H1 (cell line): ENCODE measurements at regions of chr3 and their contacts with region 1.

Region 1: GRCh38 chr3:10344147-10344943 is 23.4 kb upstream of the SEC13 start:
- DNase-seq: peak; percentile 33 to 85
- H3K4me3 ChIP-seq: no peak overlapping the region
- H3K27ac ChIP-seq: no peak overlapping the region
- H3K4me1 ChIP-seq: peaks cover 0 to 2% (median 0%) of the 10 kb centered on the region in 4 experiments; a peak in 1 of 7 replicates
- H3K27me3 ChIP-seq: no peaks in the 10 kb centered on the region
- CTCF ChIP-seq: peak in 2 of 3 experiments; percentile 87 to 90; a peak in 3 of 4 replicates
- EP300 ChIP-seq: no peak
- POLR2A ChIP-seq: no peak
- RAD21 ChIP-seq: peak; percentile 90 to 91

Region 2: GRCh38 chr3:10299679-10300078 is 44.7 kb before region 1 on chr3:
- CTCF ChIA-PET with region 1: no interaction called
- POLR2A ChIA-PET with region 1: no interaction called
- DNase-seq: no peak
- H3K4me3 ChIP-seq: no peak overlapping the region
- H3K27ac ChIP-seq: no peak overlapping the region
- H3K4me1 ChIP-seq: no peaks in the 10 kb centered on the region
- H3K27me3 ChIP-seq: no peaks in the 10 kb centered on the region
- CTCF ChIP-seq: no peak
- EP300 ChIP-seq: no peak
- POLR2A ChIP-seq: no peak
- RAD21 ChIP-seq: no peak

Region 3: DNA sequence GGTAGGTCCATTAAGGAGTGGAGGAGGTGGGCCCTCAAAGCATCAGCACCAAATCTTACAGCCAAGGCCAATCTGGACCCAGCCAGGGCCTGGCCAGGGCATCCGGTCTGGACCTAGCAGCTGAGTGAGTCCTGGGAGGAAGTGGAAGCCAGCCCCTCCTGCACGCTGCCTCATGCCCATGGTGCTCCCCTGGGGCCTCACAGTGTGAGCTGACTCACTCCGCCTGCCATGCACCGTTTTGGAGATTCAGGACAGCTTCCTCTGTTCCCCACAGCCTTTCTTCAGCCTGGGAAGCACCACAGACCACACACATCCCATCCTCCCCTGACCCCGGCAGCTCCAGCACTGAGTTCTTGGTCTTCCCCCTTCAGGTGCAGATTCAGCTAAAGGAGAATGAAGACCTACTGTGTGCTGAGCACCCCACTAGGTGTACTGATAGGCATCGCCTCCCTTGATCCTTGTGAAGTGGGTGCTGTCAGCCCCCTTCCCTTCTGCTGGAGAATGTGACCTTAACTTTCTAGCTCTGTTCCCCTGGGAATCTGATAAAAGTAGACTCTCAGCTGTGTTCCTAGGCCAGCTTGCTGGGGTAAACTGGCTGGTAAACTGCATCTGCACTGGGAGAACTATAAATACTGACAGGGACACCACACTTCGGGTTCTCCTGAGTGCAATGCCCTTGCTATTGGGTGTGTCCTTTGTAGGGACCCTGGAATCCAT is 13.4 kb after region 1 on chr3:
- CTCF ChIA-PET with region 1: interaction called, 16 read pairs
- POLR2A ChIA-PET with region 1: no interaction called
- DNase-seq: no peak
- H3K4me3 ChIP-seq: no peak overlapping the region
- H3K27ac ChIP-seq: no peak overlapping the region
- H3K4me1 ChIP-seq: no peaks in the 10 kb centered on the region; a peak in 1 of 7 replicates
- H3K27me3 ChIP-seq: no peaks in the 10 kb centered on the region; a peak in 1 of 7 replicates
- CTCF ChIP-seq: no peak
- EP300 ChIP-seq: no peak
- POLR2A ChIP-seq: no peak
- RAD21 ChIP-seq: no peak

Region 4: DNA sequence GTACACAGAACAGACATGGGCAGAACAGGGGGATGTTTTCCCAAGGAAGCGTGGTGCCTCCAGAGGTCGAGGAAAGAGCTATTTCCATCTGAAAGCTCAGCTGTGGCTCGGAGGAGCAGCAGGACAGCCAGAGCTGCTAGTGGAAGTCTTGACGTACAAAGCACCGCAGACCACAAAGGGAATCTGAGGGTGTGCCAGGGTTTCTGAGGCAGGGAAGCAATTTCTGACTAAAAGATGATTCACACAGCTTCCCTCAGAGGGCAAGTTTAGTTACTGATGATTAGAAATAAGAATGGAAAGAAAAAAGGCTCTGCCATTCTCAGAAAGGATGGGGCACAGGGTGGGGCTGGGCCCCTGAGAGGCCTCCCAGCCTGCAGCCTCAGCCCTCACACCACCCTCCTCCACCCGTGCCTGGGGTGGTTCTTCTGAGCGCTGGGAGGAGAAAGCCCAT is 22.3 kb after region 1 on chr3:
- CTCF ChIA-PET with region 1: interaction called, 16 read pairs
- POLR2A ChIA-PET with region 1: interaction called, 5 read pairs
- DNase-seq: no peak
- H3K4me3 ChIP-seq: no peak overlapping the region
- H3K27ac ChIP-seq: no peak overlapping the region
- H3K4me1 ChIP-seq: peaks cover 0 to 6% (median 2%) of the 10 kb centered on the region in 4 experiments; a peak in 4 of 7 replicates
- H3K27me3 ChIP-seq: no peaks in the 10 kb centered on the region
- CTCF ChIP-seq: no peak
- EP300 ChIP-seq: no peak
- POLR2A ChIP-seq: no peak
- RAD21 ChIP-seq: no peak

Region 5: DNA sequence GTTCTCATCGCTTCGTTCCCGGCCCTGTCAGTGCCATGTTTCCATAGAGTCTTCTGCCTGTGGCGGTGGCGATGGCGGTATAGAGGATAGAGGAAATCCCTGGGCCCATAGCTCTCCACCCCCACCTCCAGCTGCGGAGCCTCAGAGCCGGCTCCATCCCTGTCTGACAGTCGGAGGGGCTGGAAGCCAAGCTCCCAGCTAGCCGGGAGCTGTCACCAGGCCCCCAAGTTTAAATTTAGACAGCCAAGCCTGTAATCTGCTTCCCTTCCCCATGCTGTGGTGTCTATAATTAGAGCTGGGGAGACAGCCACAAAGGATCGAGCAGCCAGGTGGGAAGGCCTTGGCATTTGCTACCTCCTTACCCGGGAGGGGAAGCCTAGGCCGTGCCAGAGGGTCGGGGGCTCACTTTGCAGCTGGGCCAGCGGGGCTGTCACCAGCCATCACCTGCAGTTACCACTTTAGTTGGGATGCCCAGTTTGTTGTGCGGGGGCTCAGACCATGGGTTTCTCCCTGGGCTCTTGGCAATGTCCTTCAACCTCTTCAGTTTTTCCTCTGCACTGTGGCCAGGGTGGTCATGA is 32.9 kb after region 1 on chr3:
- CTCF ChIA-PET with region 1: interaction called, 13 read pairs
- POLR2A ChIA-PET with region 1: no interaction called
- DNase-seq: no peak
- H3K4me3 ChIP-seq: no peak overlapping the region
- H3K27ac ChIP-seq: no peak overlapping the region
- H3K4me1 ChIP-seq: peaks cover 0 to 5% (median 2%) of the 10 kb centered on the region in 4 experiments; a peak in 5 of 7 replicates
- H3K27me3 ChIP-seq: no peaks in the 10 kb centered on the region; a peak in 2 of 7 replicates
- CTCF ChIP-seq: no peak
- EP300 ChIP-seq: no peak
- POLR2A ChIP-seq: no peak
- RAD21 ChIP-seq: no peak

Region 6: DNA sequence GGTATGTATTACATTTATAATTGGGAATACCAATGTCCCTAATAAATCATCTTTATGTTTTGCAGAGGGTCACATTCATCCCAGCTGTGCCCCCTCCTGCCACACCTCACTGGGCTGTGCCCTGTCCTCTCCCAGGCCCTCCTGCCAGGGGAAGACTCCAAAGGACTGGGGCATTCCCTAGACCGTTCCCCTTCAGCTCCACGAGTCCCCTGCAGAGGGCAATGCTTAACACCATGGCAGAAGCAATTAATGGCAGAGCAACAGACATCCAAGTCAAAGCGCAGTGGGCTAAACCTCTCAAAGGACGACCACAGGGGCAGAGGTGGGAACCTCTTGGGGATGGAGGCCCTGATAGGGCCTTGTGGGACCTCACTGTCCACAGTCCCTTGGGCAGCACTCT is 47.9 kb after region 1 on chr3:
- CTCF ChIA-PET with region 1: interaction called, 17 read pairs
- POLR2A ChIA-PET with region 1: no interaction called
- DNase-seq: no peak
- H3K4me3 ChIP-seq: no peak overlapping the region
- H3K27ac ChIP-seq: no peak overlapping the region
- H3K4me1 ChIP-seq: peaks cover 6 to 22% (median 14%) of the 10 kb centered on the region in 4 experiments
- H3K27me3 ChIP-seq: no peaks in the 10 kb centered on the region
- CTCF ChIP-seq: peak; percentile 25 to 35 (median 35); a peak in 3 of 4 replicates
- EP300 ChIP-seq: no peak
- POLR2A ChIP-seq: no peak
- RAD21 ChIP-seq: peak; percentile 29 to 44

Region 7: GRCh38 chr3:10417849-10418248 is 73.5 kb after region 1 on chr3:
- CTCF ChIA-PET with region 1: interaction called, 46 read pairs
- POLR2A ChIA-PET with region 1: no interaction called
- DNase-seq: no peak
- H3K4me3 ChIP-seq: no peak overlapping the region
- H3K27ac ChIP-seq: no peak overlapping the region
- H3K4me1 ChIP-seq: no peaks in the 10 kb centered on the region
- H3K27me3 ChIP-seq: no peaks in the 10 kb centered on the region
- CTCF ChIP-seq: peak in 2 of 3 experiments; percentile 39 to 41; a peak in 3 of 4 replicates
- EP300 ChIP-seq: no peak
- POLR2A ChIP-seq: no peak
- RAD21 ChIP-seq: peak; percentile 62 to 66

Region 8: GRCh38 chr3:10515884-10516495 is 171.6 kb after region 1 on chr3:
- CTCF ChIA-PET with region 1: interaction called, 11 read pairs
- POLR2A ChIA-PET with region 1: no interaction called
- DNase-seq: no peak
- H3K4me3 ChIP-seq: no peak overlapping the region
- H3K27ac ChIP-seq: no peak overlapping the region
- H3K4me1 ChIP-seq: peaks cover 0 to 5% (median 0%) of the 10 kb centered on the region in 4 experiments; a peak in 4 of 7 replicates
- H3K27me3 ChIP-seq: no peaks in the 10 kb centered on the region; a peak in 1 of 7 replicates
- CTCF ChIP-seq: peak; percentile 64 to 67 (median 64)
- EP300 ChIP-seq: no peak
- POLR2A ChIP-seq: no peak
- RAD21 ChIP-seq: peak; percentile 69 to 70